ENCODE measurements at regions of chr19 and their contacts with region 1.

Region 1: GRCh38 chr19:6737284-6738046 is at the start of gene GPR108:
- DNase-seq: peak; percentile 100
- ATAC-seq: peak; percentile 82
- H3K4me3 ChIP-seq: peak within 1 kb of the TSS; percentile 100
- H3K27ac ChIP-seq: peak within 1 kb of the TSS; percentile 92
- H3K4me1 ChIP-seq: peaks cover 30% of the 10 kb centered on the region
- H3K27me3 ChIP-seq: no peaks in the 10 kb centered on the region
- CTCF ChIP-seq: no peak
- EP300 ChIP-seq: no peak
- POLR2A ChIP-seq: peak; percentile 66
- RAD21 ChIP-seq: no peak
- polyA plus RNA-seq, gene GPR108: 4.4 to 17.6 TPM

Region 2: GRCh38 chr19:6602729-6603114 is 134.7 kb before region 1 on chr19:
- CTCF ChIA-PET with region 1: interaction called, 14 read pairs
- POLR2A ChIA-PET with region 1: interaction called, 3 read pairs
- RAD21 ChIA-PET with region 1: interaction called, 7 read pairs
- SMC1A ChIA-PET with region 1: no interaction called
- in situ Hi-C with region 1: no loop called
- intact Hi-C with region 1: no loop called
- DNase-seq: no peak
- ATAC-seq: peak; percentile 14
- H3K4me3 ChIP-seq: peak overlapping the region; percentile 76; the same call in 1 of the 2 replicates
- H3K27ac ChIP-seq: peak overlapping the region; percentile 95
- H3K4me1 ChIP-seq: peaks cover 27% of the 10 kb centered on the region
- H3K27me3 ChIP-seq: no peaks in the 10 kb centered on the region
- CTCF ChIP-seq: no peak
- EP300 ChIP-seq: no peak
- POLR2A ChIP-seq: no peak
- RAD21 ChIP-seq: no peak

Region 3: DNA sequence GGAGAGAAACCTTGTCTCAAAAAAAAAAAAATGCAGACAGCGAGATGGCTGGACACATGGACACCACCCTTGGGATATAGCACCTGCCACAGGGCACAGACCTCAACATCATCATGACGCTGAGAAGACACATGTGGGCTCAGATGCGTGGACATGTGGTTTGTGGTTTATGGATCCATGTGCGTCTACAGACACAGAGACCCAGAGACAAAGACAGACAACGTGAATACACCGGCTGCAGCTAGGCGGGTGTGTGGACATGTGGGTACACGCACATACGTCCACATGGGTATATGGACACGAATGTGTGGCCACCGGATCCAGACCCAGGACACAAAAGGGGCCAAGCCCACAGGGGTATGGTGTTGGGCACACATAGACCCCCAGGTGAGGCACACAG is 68.8 kb before region 1 on chr19:
- CTCF ChIA-PET with region 1: interaction called, 9 read pairs
- POLR2A ChIA-PET with region 1: interaction called, 13 read pairs
- RAD21 ChIA-PET with region 1: interaction called, 21 read pairs
- SMC1A ChIA-PET with region 1: interaction called, 25 read pairs
- in situ Hi-C with region 1: no loop called
- intact Hi-C with region 1: loop called (anchors 2 kb)
- DNase-seq: no peak
- ATAC-seq: peak; percentile 7
- H3K4me3 ChIP-seq: peak overlapping the region; percentile 74
- H3K27ac ChIP-seq: peak overlapping the region; percentile 81
- H3K4me1 ChIP-seq: peaks cover 16% of the 10 kb centered on the region
- H3K27me3 ChIP-seq: no peaks in the 10 kb centered on the region
- CTCF ChIP-seq: no peak
- EP300 ChIP-seq: no peak
- POLR2A ChIP-seq: no peak
- RAD21 ChIP-seq: no peak

Region 4: DNA sequence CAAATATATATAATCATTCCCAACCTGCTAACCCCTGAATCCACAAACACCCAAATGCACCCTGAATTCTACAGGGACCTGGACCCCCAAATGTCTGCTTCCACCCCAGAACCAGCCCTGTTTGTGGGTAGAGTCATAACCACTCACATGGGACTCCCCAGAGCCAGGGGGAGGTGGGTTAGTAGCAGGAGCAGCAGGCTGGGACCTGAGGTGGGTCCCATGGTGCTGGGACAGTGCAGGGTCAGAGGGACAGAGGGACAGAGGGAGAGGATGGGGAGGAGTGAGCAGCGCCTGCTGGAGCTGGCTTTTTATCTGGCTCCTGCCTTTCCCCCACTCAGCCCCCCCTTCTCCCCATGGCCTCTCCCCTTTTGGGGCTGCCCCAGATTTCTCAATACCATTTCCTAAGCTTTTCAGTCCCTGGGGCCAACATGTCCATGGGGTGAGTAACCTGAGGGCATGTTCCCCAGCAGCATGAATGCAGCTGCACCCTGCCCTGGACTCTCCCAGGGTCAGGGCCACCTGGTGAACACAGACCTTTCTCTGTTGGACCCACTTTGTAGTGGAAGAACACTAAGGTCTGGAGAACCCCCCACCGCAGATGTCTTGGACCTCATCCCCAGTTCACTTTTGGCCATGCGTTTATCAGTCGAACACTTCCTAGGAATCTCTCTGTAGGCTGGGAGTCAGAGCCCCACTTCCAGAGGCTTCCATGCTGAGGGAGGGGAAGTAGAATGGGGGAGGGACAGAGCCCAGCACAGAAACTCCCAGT is 16.9 kb before region 1 on chr19 and contains the start of gene C3:
- CTCF ChIA-PET with region 1: interaction called, 18 read pairs
- POLR2A ChIA-PET with region 1: interaction called, 5 read pairs
- RAD21 ChIA-PET with region 1: interaction called, 11 read pairs
- SMC1A ChIA-PET with region 1: interaction called, 7 read pairs
- in situ Hi-C with region 1: no loop called
- intact Hi-C with region 1: no loop called
- DNase-seq: no peak
- ATAC-seq: no peak
- H3K4me3 ChIP-seq: 0 out of 2 replicates have a peak within 1 kb of the TSS, but pooled peaks have one; percentile 4
- H3K27ac ChIP-seq: peak within 1 kb of the TSS; percentile 60
- H3K4me1 ChIP-seq: peaks cover 32% of the 10 kb centered on the region
- H3K27me3 ChIP-seq: no peaks in the 10 kb centered on the region
- CTCF ChIP-seq: no peak
- EP300 ChIP-seq: no peak
- POLR2A ChIP-seq: no peak
- RAD21 ChIP-seq: no peak
- polyA plus RNA-seq, gene C3: 0.64 to 2.7 TPM

Region 5: DNA sequence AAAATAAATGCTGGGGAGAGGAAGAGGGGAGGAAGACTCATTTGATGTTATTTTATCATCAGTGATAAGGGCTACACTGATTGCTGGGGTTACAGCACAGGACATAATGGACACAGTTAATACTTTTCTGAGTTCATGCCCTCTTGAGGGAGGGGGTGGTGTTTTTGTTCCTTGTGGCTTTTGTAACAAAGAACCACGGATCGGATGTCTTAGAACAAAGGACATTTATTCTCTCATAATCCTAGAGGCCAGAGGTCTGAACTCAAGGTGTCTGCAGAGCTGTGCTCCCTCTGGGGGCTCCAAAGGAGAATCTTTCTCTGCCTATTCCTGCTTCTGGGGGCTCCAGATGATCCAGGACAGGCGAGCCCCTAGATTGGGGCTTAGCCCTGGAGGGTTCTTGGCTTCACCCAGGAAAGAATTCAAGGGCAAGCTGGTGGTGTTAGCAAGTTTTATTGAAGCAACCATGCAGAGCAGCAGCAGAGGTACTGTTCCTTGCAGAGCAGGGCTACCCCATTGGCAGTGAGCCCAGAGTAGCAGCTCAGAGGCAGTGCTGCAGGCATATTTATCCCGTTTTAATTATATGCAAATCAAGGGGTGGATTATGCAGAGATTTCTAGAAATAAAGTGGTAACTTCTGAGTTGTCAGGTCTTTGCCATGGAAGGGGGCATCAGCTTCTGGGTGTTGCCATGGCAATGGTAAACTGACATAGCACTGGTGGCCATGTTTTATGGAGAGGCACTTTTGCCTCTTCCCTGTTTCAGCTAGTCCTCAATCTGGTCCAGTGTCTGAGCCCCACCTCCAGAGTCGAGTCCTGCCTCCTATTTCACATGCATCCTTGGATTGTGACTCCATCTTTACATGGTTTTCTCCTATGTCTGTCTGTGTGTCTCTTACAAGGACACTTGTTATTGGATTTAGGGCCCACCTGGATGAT is 53.0 kb after region 1 on chr19:
- CTCF ChIA-PET with region 1: no interaction called
- POLR2A ChIA-PET with region 1: no interaction called
- RAD21 ChIA-PET with region 1: no interaction called
- SMC1A ChIA-PET with region 1: no interaction called
- in situ Hi-C with region 1: no loop called
- intact Hi-C with region 1: no loop called
- DNase-seq: no peak
- ATAC-seq: no peak
- H3K4me3 ChIP-seq: no peak overlapping the region
- H3K27ac ChIP-seq: no peak overlapping the region
- H3K4me1 ChIP-seq: no peaks in the 10 kb centered on the region
- H3K27me3 ChIP-seq: no peaks in the 10 kb centered on the region
- CTCF ChIP-seq: no peak
- EP300 ChIP-seq: no peak
- POLR2A ChIP-seq: no peak
- RAD21 ChIP-seq: no peak

Region 6: GRCh38 chr19:6801485-6802086 is 64.1 kb after region 1 on chr19:
- CTCF ChIA-PET with region 1: interaction called, 12 read pairs
- POLR2A ChIA-PET with region 1: interaction called, 3 read pairs
- RAD21 ChIA-PET with region 1: interaction called, 13 read pairs
- SMC1A ChIA-PET with region 1: interaction called, 14 read pairs
- in situ Hi-C with region 1: no loop called
- intact Hi-C with region 1: loop called (anchors 2 kb)
- DNase-seq: peak; percentile 85
- ATAC-seq: peak; percentile 81
- H3K4me3 ChIP-seq: peak overlapping the region; percentile 66
- H3K27ac ChIP-seq: peak overlapping the region; percentile 89
- H3K4me1 ChIP-seq: peaks cover 25% of the 10 kb centered on the region
- H3K27me3 ChIP-seq: no peaks in the 10 kb centered on the region
- CTCF ChIP-seq: no peak
- EP300 ChIP-seq: no peak
- POLR2A ChIP-seq: peak; percentile 59; the same call in 1 of the 2 replicates
- RAD21 ChIP-seq: no peak